Naive thymus-derived CD4-positive, alpha-beta T cell (primary cell): ENCODE measurements at regions of chr9 and their contacts with region 1.

Region 1: GRCh38 chr9:135907431-135908092 is at the start of gene CAMSAP1:
- DNase-seq: peak; percentile 89 to 97 (median 93)
- ATAC-seq: peak; percentile 91
- H3K4me3 ChIP-seq: peak within 1 kb of the TSS; percentile 69
- H3K4me3 Mint-ChIP-seq: peak within 1 kb of the TSS; percentile 85 to 94 (median 90)
- H3K27ac ChIP-seq: peak within 1 kb of the TSS; percentile 89
- H3K27ac Mint-ChIP-seq: peak within 1 kb of the TSS; percentile 68 to 92 (median 83)
- H3K4me1 ChIP-seq: peaks cover 21% of the 10 kb centered on the region in 2 donors
- H3K4me1 Mint-ChIP-seq: peaks cover 33 to 74% (median 63%) of the 10 kb centered on the region in 7 donors
- H3K27me3 ChIP-seq: no peaks in the 10 kb centered on the region
- H3K27me3 Mint-ChIP-seq: no peaks in the 10 kb centered on the region
- total RNA-seq, gene CAMSAP1: 16.4 to 34.3 (median 23.6) TPM

Region 2: DNA sequence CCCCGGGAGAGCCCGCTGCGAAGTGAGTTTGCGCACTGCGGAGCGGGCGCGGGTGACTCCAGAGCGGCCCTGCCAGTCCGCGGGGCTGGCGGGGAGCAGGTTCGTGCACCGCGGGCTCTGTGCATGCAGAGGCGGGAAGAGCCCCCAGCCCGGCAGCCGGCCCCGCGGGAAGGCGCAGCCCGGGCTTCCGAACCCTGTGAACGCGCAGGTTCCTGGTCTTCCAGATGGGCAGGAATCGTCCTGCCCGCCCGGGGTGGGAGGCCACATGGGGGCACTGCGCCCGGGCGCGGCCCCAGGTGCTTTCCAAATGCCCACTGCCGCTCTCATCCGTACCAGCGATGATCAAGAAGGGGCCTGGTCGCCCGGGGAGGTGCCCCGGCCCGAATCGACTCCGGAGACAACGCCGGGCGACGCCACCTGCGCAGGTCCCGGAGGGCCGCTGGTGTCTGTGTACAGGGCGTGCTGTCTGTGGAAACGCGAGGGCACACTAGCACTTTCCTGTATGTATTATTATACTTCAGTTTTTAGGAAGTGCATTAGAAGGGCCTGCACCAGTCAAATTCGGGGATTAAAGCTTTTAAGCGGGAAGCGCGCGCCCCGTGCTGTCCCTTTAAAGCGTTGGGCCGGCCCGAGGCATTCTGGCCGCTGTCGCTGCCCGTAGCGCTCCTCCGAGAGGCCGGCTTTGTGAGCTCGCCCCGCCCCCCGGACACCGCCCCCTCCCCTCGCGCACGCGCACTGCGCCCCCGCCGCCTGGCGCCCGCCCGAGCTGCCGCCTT is 1772.0 kb before region 1 on chr9 and contains the start of gene WDR5:
- CTCF ChIA-PET with region 1: no interaction called
- POLR2A ChIA-PET with region 1: no interaction called
- intact Hi-C with region 1: loop called in 1 of 2 experiments (anchors 5 kb)
- DNase-seq: peak; percentile 85 to 97 (median 92)
- ATAC-seq: peak; percentile 96
- H3K4me3 ChIP-seq: peak within 1 kb of the TSS; percentile 94
- H3K4me3 Mint-ChIP-seq: peak within 1 kb of the TSS; percentile 88 to 98 (median 92)
- H3K27ac ChIP-seq: peak within 1 kb of the TSS; percentile 80
- H3K27ac Mint-ChIP-seq: peak within 1 kb of the TSS; percentile 84 to 93 (median 89)
- H3K4me1 ChIP-seq: peaks cover 19 to 28% of the 10 kb centered on the region in 2 donors
- H3K4me1 Mint-ChIP-seq: peaks cover 33 to 65% (median 49%) of the 10 kb centered on the region in 7 donors
- H3K27me3 ChIP-seq: no peaks in the 10 kb centered on the region
- H3K27me3 Mint-ChIP-seq: no peaks in the 10 kb centered on the region
- total RNA-seq, gene WDR5: 16.0 to 42.3 (median 30.9) TPM

Region 3: DNA sequence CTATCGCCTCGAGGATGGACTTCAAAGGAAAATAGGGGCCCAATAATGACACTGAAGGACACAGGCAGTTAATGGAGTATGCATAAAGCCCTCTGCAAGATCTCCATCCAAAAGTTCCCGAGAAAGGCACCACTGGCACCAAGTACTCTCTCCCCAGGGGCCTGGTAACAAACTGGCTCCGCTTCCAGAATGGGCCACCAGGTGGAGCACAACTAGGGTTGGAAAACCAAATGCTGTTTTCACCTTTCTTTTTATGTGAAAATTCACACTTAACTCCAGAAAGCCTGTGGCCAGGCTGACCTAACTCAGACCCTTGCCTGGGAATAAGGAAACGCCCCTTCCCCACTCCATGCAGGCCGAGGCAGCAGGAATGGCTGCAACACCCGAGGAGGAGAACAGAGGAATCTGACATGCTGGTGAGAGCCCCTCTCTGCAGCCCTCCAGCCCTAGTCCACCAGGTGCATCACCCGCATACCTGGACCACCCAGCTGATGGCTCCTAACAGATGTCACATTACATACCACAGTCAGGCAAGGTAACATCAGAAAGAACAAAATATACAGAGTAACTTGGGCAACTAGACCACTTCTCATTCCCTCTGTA is 43.0 kb before region 1 on chr9:
- CTCF ChIA-PET with region 1: interaction called, 6 read pairs
- POLR2A ChIA-PET with region 1: interaction called, 3 read pairs
- intact Hi-C with region 1: loop called (anchors 1 to 5 kb)
- DNase-seq: peak; percentile 20 to 70 (median 55)
- ATAC-seq: peak; percentile 74
- H3K4me3 ChIP-seq: no peak overlapping the region
- H3K4me3 Mint-ChIP-seq: no peak overlapping the region
- H3K27ac ChIP-seq: no peak overlapping the region
- H3K27ac Mint-ChIP-seq: no peak overlapping the region
- H3K4me1 ChIP-seq: peaks cover 0 to 4% of the 10 kb centered on the region in 2 donors
- H3K4me1 Mint-ChIP-seq: peaks cover 5 to 26% (median 17%) of the 10 kb centered on the region in 7 donors
- H3K27me3 ChIP-seq: no peaks in the 10 kb centered on the region
- H3K27me3 Mint-ChIP-seq: no peaks in the 10 kb centered on the region

Region 4: DNA sequence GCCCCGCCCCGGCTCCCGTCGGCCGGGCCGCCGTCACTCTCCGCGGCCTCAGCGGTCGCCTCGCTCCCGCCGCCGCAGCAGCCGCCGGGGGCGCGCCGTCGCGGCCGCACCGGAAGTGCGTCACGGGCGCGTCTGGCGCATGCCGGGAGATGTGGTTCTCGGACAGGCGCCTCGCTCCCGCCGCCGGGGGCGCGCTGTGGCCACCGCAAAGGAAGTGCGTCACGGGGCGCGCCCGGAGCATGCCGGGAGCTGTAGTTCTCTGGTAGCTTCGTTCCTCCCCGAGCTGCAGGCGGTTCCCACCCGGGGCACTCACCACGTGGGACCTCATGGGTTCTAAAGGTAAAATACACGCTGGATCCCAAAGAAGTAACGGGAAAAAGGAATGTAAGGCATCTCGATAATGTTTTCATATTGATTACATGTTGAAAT is 53.7 kb after region 1 on chr9 and contains the start of gene UBAC1:
- CTCF ChIA-PET with region 1: no interaction called
- POLR2A ChIA-PET with region 1: interaction called, 3 read pairs
- intact Hi-C with region 1: loop called (anchors 1 kb)
- DNase-seq: peak; percentile 91 to 96 (median 94)
- ATAC-seq: peak; percentile 97
- H3K4me3 ChIP-seq: peak within 1 kb of the TSS; percentile 65
- H3K4me3 Mint-ChIP-seq: peak within 1 kb of the TSS; percentile 78 to 93 (median 88)
- H3K27ac ChIP-seq: peak within 1 kb of the TSS; percentile 82
- H3K27ac Mint-ChIP-seq: peak within 1 kb of the TSS; percentile 74 to 94 (median 83)
- H3K4me1 ChIP-seq: peaks cover 15 to 16% of the 10 kb centered on the region in 2 donors
- H3K4me1 Mint-ChIP-seq: peaks cover 20 to 39% (median 30%) of the 10 kb centered on the region in 7 donors
- H3K27me3 ChIP-seq: no peaks in the 10 kb centered on the region
- H3K27me3 Mint-ChIP-seq: peaks cover 0 to 15% (median 0%) of the 10 kb centered on the region in 5 donors
- total RNA-seq, gene UBAC1: 28.6 to 36.1 (median 32.2) TPM

Region 5: DNA sequence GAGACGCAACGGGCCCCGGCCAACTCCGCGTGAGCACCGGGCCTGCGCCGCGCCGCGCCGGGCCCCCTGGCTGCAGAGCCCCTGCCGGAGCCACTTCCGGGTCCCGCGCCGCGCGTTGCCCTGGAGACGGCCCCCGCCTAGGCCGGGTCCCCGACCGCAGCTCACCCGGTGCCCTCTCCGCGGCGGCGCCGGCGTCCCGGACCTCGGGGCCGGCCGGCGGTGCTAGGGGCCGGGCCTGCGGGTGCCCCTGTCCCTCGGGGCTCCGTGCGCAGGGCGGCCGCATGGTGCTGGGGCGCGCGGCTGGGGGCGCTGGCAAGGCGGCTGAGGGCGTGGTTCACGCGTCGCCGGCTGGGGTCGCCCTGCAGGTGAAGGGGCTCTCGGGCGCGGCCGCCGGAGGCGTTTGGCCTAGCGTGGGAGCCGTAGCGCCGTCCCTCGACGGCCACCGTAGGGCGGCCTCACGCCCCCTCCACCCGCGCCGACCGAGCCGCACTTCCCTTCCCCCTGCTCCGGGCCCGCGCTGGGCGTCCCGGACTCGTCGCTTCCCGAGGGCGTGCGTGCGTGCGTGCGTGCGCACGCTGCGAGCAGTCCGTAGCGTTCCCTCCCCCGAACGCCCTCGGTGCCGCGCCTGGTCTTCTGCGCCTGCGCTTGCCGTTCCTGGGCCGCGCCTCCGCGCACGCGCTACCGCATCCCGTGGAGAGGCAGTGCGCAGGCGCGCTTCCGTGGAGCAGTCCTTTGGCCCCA is 210.9 kb after region 1 on chr9 and contains the start of gene TMEM250:
- CTCF ChIA-PET with region 1: no interaction called
- POLR2A ChIA-PET with region 1: no interaction called
- intact Hi-C with region 1: loop called (anchors 1 kb)
- DNase-seq: peak; percentile 94 to 98 (median 97)
- ATAC-seq: peak; percentile 94
- H3K4me3 ChIP-seq: peak within 1 kb of the TSS; percentile 81
- H3K4me3 Mint-ChIP-seq: peak within 1 kb of the TSS; percentile 73 to 87 (median 84)
- H3K27ac ChIP-seq: peak within 1 kb of the TSS; percentile 87
- H3K27ac Mint-ChIP-seq: peak within 1 kb of the TSS; percentile 13 to 91 (median 84)
- H3K4me1 ChIP-seq: peaks cover 14 to 33% of the 10 kb centered on the region in 2 donors
- H3K4me1 Mint-ChIP-seq: peaks cover 3 to 26% (median 11%) of the 10 kb centered on the region in 7 donors
- H3K27me3 ChIP-seq: no peaks in the 10 kb centered on the region
- H3K27me3 Mint-ChIP-seq: no peaks in the 10 kb centered on the region
- total RNA-seq, gene TMEM250: 16.4 to 55.3 (median 41.3) TPM

Region 6: DNA sequence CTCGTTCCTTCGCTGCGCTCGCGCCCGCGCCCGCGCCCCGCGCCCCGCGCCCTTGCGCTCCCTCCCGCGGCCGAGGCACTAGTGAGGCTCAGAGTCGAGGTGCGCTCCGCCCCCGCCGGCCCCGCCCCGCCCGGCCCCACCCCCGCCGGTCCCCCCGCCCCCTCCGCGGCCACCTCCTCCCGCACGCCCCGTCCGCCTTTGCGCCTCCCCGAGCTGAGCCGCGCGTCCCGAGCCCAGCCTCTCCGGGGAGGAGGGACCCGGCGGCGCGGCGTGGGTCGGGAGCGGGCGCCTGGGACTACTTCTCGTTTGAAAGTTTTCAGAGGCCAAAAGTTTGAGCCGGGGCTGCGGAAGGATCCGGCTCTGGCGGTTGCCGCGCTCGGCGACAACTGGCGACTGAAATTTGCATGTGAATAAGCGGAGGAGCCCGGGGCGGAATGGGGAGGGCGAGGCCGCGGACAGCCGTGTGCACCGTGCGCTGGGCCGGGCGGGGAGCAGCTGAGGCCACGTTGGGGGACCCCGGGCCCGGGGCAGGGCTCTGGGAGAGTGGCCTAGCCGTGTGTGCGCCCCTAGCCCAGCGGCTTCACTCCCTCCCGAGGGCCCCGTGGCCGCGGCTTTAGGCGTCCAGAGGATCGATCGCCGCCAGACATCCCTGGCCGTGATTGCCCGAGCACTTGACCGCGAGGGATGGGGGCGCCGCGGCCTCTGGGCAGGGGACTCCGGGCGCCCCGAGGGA is 638.6 kb after region 1 on chr9 and contains the start of gene NOTCH1:
- CTCF ChIA-PET with region 1: no interaction called
- POLR2A ChIA-PET with region 1: no interaction called
- intact Hi-C with region 1: loop called in 1 of 2 experiments (anchors 5 kb)
- DNase-seq: peak; percentile 77 to 91 (median 86)
- ATAC-seq: peak; percentile 89
- H3K4me3 ChIP-seq: peak within 1 kb of the TSS; percentile 81
- H3K4me3 Mint-ChIP-seq: peak within 1 kb of the TSS; percentile 78 to 95 (median 88)
- H3K27ac ChIP-seq: peak within 1 kb of the TSS; percentile 80
- H3K27ac Mint-ChIP-seq: peak within 1 kb of the TSS; percentile 57 to 90 (median 81)
- H3K4me1 ChIP-seq: peaks cover 20 to 32% of the 10 kb centered on the region in 2 donors
- H3K4me1 Mint-ChIP-seq: peaks cover under 1 to 43% (median 28%) of the 10 kb centered on the region in 7 donors
- H3K27me3 ChIP-seq: no peaks in the 10 kb centered on the region
- H3K27me3 Mint-ChIP-seq: no peaks in the 10 kb centered on the region
- total RNA-seq, gene NOTCH1: 49.7 to 92.9 (median 58.0) TPM